ENCODE measurements at regions of chr1 and their contacts with region 1.

Region 1: GRCh38 chr1:52601991-52602855 is at the start of gene GPX7:
- DNase-seq: peak; percentile 79
- total RNA-seq, gene GPX7: 12.7 TPM

Region 2: DNA sequence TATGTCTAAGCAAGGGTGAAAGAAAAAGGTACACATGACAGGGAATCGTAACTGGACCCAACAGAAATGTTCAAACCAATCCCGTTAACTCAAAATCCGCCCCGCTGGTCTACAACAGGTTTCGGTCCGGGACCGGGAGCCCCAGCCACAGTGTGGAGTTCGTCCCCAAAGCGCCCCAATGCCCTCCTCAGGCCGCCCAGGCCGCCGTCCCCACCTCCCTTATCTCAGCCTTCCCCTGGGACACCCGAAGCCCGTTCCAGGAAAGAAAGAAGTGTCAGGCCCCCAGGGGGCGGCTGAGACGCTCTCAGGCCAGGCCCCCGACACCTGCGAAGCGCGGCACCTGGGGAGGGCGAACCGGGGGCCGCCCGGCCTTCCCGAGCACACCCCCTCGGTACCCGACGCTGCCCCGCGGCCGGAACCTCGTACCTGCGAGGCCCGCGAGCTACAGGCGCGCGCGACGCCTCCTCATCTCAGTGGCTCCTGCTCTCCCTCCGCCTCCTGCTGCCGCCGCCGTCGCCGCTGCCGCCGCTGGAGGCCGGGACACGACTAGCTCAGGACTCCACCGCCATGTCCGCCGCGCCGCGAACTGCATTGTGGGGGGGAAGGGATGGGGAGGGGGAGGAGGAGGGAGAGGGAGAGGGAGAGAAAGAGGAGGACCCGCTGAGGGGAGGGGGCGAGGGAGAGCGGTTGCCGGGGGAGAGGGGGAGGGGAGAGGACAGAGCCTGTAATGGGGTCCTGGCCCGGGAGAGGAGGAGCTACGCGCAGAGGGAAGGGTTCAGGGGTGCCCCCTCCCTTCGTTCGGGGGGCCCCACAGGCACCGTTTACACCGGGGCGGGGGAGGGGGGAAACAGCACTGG is 49.5 kb before region 1 on chr1 and contains the start of gene TUT4:
- intact Hi-C with region 1: loop called (anchors 2 kb)
- DNase-seq: peak; percentile 91
- total RNA-seq, gene TUT4: 37.1 TPM